AG04449 (cell line): ENCODE measurements at regions of chr5 and their contacts with region 1.

Region 1: GRCh38 chr5:67165526-67166459 is 30.8 kb downstream of the CD180 start:
- DNase-seq: no peak
- H3K4me3 ChIP-seq: no peak overlapping the region
- CTCF ChIP-seq: peak; percentile 68

Region 2: GRCh38 chr5:67209142-67209771 is 43.5 kb after region 1 on chr5:
- CTCF ChIA-PET with region 1: interaction called, 183 read pairs
- POLR2A ChIA-PET with region 1: no interaction called
- DNase-seq: no peak
- H3K4me3 ChIP-seq: no peak overlapping the region
- CTCF ChIP-seq: peak; percentile 50